ENCODE measurements at regions of chr6 and their contacts with region 1.

Region 1: DNA sequence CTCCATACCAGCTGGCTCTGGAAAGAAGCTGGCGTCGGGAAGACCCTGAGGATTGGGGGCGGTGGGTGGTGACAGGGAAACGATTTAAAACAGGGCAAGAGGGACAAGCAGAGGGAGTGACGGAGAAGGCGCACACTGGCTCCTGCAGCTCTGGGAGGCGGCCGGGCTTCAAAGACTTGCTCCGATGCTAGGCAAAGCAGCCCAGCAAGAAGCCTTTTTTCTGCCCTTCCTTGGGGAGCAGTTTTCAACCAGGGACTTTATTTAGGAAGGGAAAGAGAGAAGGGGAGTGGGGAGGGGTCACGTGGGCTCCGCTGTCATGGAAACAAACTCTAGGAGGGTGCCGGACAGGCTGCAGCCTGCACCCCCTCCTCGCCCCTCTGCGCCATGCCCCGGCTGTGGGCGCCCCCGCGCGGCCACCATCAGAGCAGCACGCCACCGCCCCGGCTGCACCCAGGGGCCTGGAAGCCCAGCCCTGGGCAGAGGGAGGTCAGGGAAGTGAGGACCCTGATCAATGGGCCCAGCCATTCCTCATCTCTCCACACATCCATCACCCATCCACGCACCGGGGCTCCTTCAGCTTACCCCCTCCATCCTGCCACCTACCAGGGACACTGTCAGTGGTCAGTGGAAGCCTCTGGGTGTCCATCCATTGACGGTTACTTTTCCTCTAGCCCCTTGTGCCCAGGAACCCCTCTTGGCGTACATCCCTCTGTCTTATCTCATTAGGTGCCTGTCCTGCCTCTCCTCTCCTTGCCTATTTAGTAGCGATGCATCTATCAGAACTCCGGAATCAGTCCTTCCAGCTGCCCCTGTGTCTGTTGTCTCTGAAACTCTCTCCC is 66.6 kb upstream of the CCDC167 start:
- DNase-seq: peak; percentile 75
- ATAC-seq: peak; percentile 96
- H3K4me3 Mint-ChIP-seq: peak overlapping the region; percentile 29
- H3K27ac Mint-ChIP-seq: no peak overlapping the region
- H3K4me1 Mint-ChIP-seq: peaks cover 3% of the 10 kb centered on the region
- H3K27me3 Mint-ChIP-seq: peaks cover 17% of the 10 kb centered on the region

Region 2: DNA sequence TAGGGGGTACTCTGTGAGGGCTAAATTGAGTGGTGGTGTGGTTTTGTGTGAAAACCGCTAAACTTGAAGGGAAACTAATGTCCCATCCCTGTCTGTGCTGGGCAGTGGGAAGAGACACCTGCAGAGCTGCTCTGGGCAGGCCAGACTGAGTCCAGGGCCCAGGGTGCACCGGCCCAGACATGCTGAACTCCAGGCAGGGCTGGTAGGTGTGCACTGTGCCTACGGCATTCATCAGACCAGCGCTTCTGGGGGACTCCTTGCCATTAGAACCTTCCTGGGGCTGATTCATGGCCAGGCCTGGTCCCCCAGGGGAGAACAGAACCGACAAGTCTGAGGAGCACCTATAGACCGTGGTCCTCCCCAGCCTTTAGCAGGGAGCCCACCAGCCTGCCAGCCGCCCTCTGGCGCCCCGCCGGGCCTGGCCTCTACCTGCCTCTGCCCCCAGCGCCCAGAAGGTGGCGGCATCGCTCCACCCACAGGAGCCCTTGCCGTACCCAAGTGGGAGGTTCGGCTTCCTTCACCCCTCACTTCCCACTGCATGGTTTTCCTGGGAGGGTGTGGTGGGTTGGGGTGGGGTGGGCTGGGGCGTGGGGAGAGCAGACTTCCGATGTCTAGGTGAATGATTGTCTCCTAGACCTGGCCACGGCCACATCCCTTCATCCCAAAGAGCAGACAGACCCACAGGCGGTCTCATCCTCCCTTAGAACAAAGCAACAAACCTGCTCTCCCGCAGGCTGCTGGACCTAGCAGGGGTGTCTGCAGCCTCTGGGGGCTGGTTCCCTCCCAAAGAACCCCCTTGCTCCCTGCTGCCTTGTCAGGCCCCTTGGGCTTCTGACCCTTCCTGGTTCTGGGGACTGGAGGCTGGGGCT is 82.2 kb before region 1 on chr6:
- CTCF ChIA-PET with region 1: interaction called, 25 read pairs
- POLR2A ChIA-PET with region 1: no interaction called
- DNase-seq: peak; percentile 80
- ATAC-seq: peak; percentile 89
- H3K4me3 Mint-ChIP-seq: no peak overlapping the region
- H3K27ac Mint-ChIP-seq: no peak overlapping the region
- H3K4me1 Mint-ChIP-seq: peaks cover 5% of the 10 kb centered on the region
- H3K27me3 Mint-ChIP-seq: no peaks in the 10 kb centered on the region

Region 3: GRCh38 chr6:37499433-37500293 is 66.7 kb before region 1 on chr6 and contains the start of gene CCDC167:
- CTCF ChIA-PET with region 1: interaction called, 21 read pairs
- POLR2A ChIA-PET with region 1: no interaction called
- DNase-seq: peak; percentile 99
- ATAC-seq: peak; percentile 87
- H3K4me3 Mint-ChIP-seq: peak within 1 kb of the TSS; percentile 97
- H3K27ac Mint-ChIP-seq: peak within 1 kb of the TSS; percentile 98
- H3K4me1 Mint-ChIP-seq: peaks cover 77% of the 10 kb centered on the region
- H3K27me3 Mint-ChIP-seq: no peaks in the 10 kb centered on the region
- total RNA-seq, gene CCDC167: 64.0 to 69.4 TPM

Region 4: GRCh38 chr6:37538107-37538506 is 28.2 kb before region 1 on chr6:
- CTCF ChIA-PET with region 1: interaction called, 10 read pairs
- POLR2A ChIA-PET with region 1: no interaction called
- DNase-seq: no peak
- ATAC-seq: no peak
- H3K4me3 Mint-ChIP-seq: no peak overlapping the region
- H3K27ac Mint-ChIP-seq: no peak overlapping the region
- H3K4me1 Mint-ChIP-seq: no peaks in the 10 kb centered on the region
- H3K27me3 Mint-ChIP-seq: peaks cover 4% of the 10 kb centered on the region

Region 5: DNA sequence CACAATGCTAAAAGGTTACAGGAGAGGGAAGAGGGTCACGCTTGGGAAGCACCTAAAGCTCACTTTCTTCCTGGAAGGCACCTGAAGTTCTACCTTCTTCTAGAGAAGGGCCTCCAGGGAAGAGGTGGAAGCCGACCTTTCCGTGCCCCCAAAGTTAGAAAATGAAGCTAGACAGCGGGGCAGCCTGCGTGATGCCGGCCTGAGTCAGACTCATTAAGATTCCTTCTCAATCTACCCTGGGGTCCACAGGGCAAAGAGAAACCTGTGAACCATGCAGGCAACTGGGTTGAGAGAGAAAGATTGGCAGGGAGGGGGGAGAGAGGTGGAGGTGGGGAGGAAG is 11.9 kb before region 1 on chr6:
- CTCF ChIA-PET with region 1: interaction called, 26 read pairs
- POLR2A ChIA-PET with region 1: no interaction called
- DNase-seq: no peak
- ATAC-seq: no peak
- H3K4me3 Mint-ChIP-seq: no peak overlapping the region
- H3K27ac Mint-ChIP-seq: no peak overlapping the region
- H3K4me1 Mint-ChIP-seq: peaks cover 18% of the 10 kb centered on the region
- H3K27me3 Mint-ChIP-seq: peaks cover 4% of the 10 kb centered on the region

Region 6: DNA sequence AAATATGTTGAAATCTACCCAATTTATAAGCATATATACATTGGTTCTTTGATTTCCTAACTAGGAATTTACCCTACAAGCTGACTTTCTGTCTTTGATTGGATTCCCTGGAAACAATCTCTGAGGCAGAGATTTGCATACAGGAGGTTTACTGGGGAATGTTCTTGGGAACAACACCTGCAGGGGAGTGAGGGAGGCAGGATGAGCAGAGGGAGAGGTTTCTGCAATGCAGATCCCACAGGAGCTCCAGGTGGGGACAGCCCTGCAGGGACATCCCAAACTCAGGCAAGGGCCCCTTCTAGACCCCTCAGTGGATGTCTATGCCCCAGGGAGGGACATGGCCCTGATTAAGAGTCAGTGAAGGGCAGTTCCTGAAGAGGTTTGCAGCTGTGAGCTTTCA is 28.6 kb after region 1 on chr6:
- CTCF ChIA-PET with region 1: no interaction called
- POLR2A ChIA-PET with region 1: no interaction called
- DNase-seq: no peak
- ATAC-seq: no peak
- H3K4me3 Mint-ChIP-seq: no peak overlapping the region
- H3K27ac Mint-ChIP-seq: no peak overlapping the region
- H3K4me1 Mint-ChIP-seq: no peaks in the 10 kb centered on the region
- H3K27me3 Mint-ChIP-seq: peaks cover 8% of the 10 kb centered on the region

Measured in activated CD8-positive, alpha-beta T cell treated with anti-CD3 and anti-CD28 coated beads, Interleukin-2, amount 10 ng/mL, durations not matched to agents 7 days and 5 days (primary cell).